ENCODE measurements at regions of chr14 and their contacts with region 1.

Region 1: GRCh38 chr14:88013750-88014349 is 8.9 kb downstream of the GPR65 start:
- DNase-seq: peak; percentile 30 to 89 (median 74)
- H3K4me3 ChIP-seq: peak overlapping the region in 9 of 59 donors; percentile 12 to 44 (median 25)
- H3K27ac ChIP-seq: no peak overlapping the region
- H3K27me3 ChIP-seq: no peaks in the 10 kb centered on the region
- CTCF ChIP-seq: peak; percentile 69 to 94 (median 86)

Region 2: DNA sequence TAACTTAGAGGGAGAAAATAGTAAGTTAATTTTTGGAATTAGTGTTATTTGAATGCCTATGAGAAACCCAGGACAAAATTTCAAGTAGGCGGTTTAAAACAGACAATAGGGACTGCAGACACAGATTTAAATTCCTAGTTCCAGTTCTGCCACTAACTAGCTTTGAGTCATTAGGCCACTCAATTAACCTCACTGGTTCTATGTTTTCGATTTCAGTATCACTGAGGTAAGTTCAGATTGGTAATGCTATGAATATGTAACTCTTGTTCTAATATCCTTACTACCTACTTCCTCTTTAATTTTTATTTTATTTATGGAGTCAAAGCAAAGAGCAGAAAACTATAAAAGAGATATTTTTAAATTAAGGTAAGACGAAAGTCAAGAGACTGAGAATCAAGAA is 73.5 kb before region 1 on chr14:
- intact Hi-C with region 1: no loop called
- DNase-seq: no peak
- H3K4me3 ChIP-seq: no peak overlapping the region
- H3K27ac ChIP-seq: no peak overlapping the region
- H3K27me3 ChIP-seq: no peaks in the 10 kb centered on the region
- CTCF ChIP-seq: no peak

Region 3: DNA sequence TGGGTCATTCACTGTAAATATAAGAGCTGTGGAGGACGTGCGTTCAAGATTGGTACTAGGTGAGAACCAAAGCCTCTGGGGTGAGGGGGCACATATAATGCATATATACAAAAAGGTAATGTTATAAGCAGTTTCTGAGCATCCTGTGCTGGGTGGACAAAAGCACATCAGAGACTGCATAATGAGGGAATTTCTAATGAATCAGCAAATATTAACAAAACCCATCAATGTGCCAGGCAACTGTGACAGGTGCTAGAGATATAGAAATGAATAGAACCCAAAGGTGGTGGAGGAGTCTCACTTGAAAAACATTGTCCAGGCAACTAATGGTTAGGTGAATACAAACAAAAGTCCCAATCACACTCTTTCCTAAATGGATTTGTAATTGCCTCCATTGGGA is 65.8 kb after region 1 on chr14:
- intact Hi-C with region 1: no loop called
- DNase-seq: no peak
- H3K4me3 ChIP-seq: no peak overlapping the region
- H3K27ac ChIP-seq: no peak overlapping the region
- H3K27me3 ChIP-seq: no peaks in the 10 kb centered on the region
- CTCF ChIP-seq: no peak

Region 4: GRCh38 chr14:88168498-88169165 is 154.8 kb after region 1 on chr14:
- intact Hi-C with region 1: loop called in 1 of 2 experiments (anchors 2 kb)
- DNase-seq: no peak
- H3K4me3 ChIP-seq: no peak overlapping the region
- H3K27ac ChIP-seq: no peak overlapping the region
- H3K27me3 ChIP-seq: peaks cover 0 to 9% (median 0%) of the 10 kb centered on the region in 45 donors
- CTCF ChIP-seq: peak in 51 of 56 donors; percentile 19 to 59 (median 38)

Region 5: GRCh38 chr14:88576222-88576621 is 562.4 kb after region 1 on chr14:
- intact Hi-C with region 1: no loop called
- DNase-seq: no peak
- H3K4me3 ChIP-seq: no peak overlapping the region
- H3K27ac ChIP-seq: no peak overlapping the region
- H3K27me3 ChIP-seq: no peaks in the 10 kb centered on the region
- CTCF ChIP-seq: no peak

Measured in dorsolateral prefrontal cortex (tissue), 120 donors.